Mammary epithelial cell (primary cell): ENCODE measurements at regions of chr9 and their contacts with region 1.

Region 1: DNA sequence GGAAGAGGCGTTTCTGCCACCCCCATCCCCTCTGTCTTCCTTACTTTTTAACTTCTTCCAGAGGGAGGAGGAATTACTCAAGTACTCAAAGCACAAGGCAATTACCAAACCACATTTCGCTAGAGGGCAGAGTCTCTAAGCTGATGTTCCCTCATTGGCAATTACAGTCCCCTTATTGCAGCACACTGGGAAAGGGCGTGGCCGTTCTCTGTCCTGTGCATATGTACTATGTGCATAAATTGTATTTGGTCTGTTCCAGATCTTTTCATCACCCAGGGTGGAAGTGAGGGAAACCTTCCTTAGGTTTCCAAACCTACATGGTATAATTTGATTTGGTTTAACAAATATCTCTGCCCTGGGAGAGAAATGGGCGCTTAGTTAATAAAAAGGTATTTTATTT is 29.8 kb upstream of the ALDOB start:
- DNase-seq: peak; percentile 74
- H3K4me3 ChIP-seq: no peak overlapping the region
- H3K27ac ChIP-seq: no peak overlapping the region
- H3K4me1 ChIP-seq: peaks cover 10% of the 10 kb centered on the region
- H3K27me3 ChIP-seq: no peaks in the 10 kb centered on the region
- CTCF ChIP-seq: peak; percentile 34 to 74

Region 2: DNA sequence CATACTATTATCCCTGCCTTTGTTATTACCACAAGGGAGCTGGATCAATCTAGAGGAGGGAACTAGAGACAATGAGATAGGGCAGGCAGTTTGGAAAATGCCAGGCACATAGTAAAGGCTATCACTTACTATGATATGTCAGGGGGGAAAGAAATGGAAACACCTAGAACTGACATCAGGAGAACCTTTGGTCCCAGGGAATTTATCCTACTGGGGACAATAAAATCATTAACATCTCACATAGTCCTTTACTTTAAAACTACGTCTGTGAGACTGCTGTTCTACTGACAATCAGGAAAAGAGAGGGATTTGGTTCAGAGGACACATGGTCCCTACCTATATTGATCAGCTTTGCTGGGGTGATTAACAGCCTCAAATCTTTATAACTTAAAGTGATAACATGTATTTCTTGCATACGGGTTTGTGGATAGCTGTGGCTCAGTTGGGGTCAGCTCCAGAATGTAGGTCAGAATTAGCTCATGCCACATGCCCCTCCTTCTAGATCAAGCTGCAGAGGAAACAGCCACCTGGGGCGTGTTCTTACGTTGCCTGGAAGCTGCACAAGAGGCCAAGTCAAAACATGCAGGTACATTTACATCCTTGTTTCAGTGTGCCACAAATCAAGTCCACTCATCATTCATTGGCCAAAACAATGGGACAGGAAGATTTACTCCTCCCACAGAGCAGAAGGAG is 14.1 kb after region 1 on chr9:
- CTCF ChIA-PET with region 1: no interaction called
- dilution Hi-C with region 1: no loop called
- in situ Hi-C with region 1: no loop called
- intact Hi-C with region 1: loop called (anchors 1 kb)
- DNase-seq: peak; percentile 91
- H3K4me3 ChIP-seq: no peak overlapping the region
- H3K27ac ChIP-seq: no peak overlapping the region
- H3K4me1 ChIP-seq: peaks cover 31% of the 10 kb centered on the region
- H3K27me3 ChIP-seq: no peaks in the 10 kb centered on the region
- CTCF ChIP-seq: no peak

Region 3: GRCh38 chr9:101486693-101487442 is 21.5 kb after region 1 on chr9:
- CTCF ChIA-PET with region 1: no interaction called
- dilution Hi-C with region 1: no loop called
- in situ Hi-C with region 1: no loop called
- intact Hi-C with region 1: loop called (anchors 2 kb)
- DNase-seq: peak; percentile 70
- H3K4me3 ChIP-seq: peak overlapping the region; percentile 26 to 49 (median 48)
- H3K27ac ChIP-seq: no peak overlapping the region
- H3K4me1 ChIP-seq: peaks cover 14% of the 10 kb centered on the region
- H3K27me3 ChIP-seq: peaks cover 3% of the 10 kb centered on the region
- CTCF ChIP-seq: peak in 1 of 2 donors; percentile 11

Region 4: GRCh38 chr9:101516655-101517054 is 51.3 kb after region 1 on chr9:
- CTCF ChIA-PET with region 1: no interaction called
- dilution Hi-C with region 1: loop called (anchors 5 kb)
- in situ Hi-C with region 1: no loop called
- intact Hi-C with region 1: no loop called
- DNase-seq: no peak
- H3K4me3 ChIP-seq: no peak overlapping the region
- H3K27ac ChIP-seq: no peak overlapping the region
- H3K4me1 ChIP-seq: no peaks in the 10 kb centered on the region
- H3K27me3 ChIP-seq: no peaks in the 10 kb centered on the region
- CTCF ChIP-seq: no peak

Region 5: GRCh38 chr9:101530077-101530711 is 64.8 kb after region 1 on chr9:
- CTCF ChIA-PET with region 1: no interaction called
- dilution Hi-C with region 1: no loop called
- in situ Hi-C with region 1: loop called in 1 of 2 experiments (anchors 5 kb)
- intact Hi-C with region 1: loop called (anchors 1 kb)
- DNase-seq: peak; percentile 57
- H3K4me3 ChIP-seq: no peak overlapping the region
- H3K27ac ChIP-seq: no peak overlapping the region
- H3K4me1 ChIP-seq: peaks cover 7% of the 10 kb centered on the region
- H3K27me3 ChIP-seq: no peaks in the 10 kb centered on the region
- CTCF ChIP-seq: peak; percentile 73 to 82